ENCODE measurements at regions of chr18 and their contacts with region 1.

Region 1: GRCh38 chr18:24426398-24427294 is at the start of gene IMPACT:
- DNase-seq: peak; percentile 88 to 93
- ATAC-seq: peak; percentile 96
- H3K4me3 ChIP-seq: peak within 1 kb of the TSS; percentile 37 to 84
- H3K27ac ChIP-seq: peak within 1 kb of the TSS in 1 of 2 donors; percentile 69
- H3K4me1 ChIP-seq: no peaks in the 10 kb centered on the region
- H3K27me3 ChIP-seq: no peaks in the 10 kb centered on the region
- total RNA-seq, gene IMPACT: 20.7 to 28.2 TPM

Region 2: DNA sequence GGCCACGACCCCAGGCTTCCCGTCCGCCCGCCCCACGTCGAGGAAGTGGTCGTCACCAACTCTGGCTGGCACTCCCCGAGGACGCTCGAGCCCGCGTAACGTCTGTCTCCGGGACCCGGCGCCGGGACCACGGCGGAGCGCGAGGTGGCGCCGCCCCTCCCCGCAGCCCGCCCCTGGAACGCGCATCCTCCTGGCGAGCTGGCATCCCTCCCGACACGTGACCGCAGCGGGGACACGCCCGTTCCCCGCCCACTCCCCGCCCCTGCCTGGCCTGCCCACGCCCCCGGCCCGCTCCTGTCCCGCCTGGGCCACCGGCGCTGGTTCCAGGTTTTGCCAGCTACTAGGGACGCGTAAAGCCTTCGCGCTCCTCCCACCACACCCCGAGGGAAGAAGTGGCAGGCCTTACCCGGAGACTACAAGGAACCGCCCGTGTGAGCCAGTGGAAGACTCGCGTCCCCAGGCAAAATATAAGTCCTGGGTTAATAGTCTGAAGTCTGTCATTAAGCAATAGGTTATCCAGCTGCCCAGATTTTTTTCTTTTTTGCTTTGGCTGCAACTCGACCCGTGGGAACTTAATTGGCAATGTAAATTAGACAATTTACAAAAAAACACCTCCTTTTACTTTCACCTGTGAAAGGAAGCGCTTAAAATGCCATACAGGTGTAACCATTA is 28.8 kb before region 1 on chr18 and contains the start of gene OSBPL1A:
- intact Hi-C with region 1: loop called in 1 of 2 experiments (anchors 2 kb)
- DNase-seq: peak; percentile 97 to 98
- ATAC-seq: peak; percentile 99
- H3K4me3 ChIP-seq: peak within 1 kb of the TSS; percentile 14 to 82
- H3K27ac ChIP-seq: peak within 1 kb of the TSS in 1 of 2 donors; percentile 41
- H3K4me1 ChIP-seq: no peaks in the 10 kb centered on the region
- H3K27me3 ChIP-seq: no peaks in the 10 kb centered on the region
- total RNA-seq, gene OSBPL1A: 43.2 to 47.4 TPM

Region 3: DNA sequence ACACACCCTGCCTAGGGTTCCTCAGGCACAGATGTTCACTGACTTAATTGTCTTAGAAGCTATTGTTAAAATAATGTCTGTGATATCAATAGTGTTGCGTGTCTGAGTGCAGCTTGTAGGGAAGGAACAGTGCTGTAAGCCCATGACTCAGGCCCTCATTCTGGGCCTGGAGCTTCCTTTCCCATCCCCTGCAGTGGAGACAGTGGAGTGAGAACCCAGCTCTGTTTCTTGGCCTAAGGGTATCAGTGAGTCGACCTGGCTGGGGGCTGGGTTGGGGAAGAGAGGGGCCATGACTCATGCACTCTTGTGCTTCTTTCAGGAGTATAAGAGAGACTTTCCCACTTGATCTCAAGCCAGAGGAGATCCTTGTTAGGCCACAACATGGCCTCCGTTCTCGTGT is 140.6 kb after region 1 on chr18:
- intact Hi-C with region 1: no loop called
- DNase-seq: no peak
- ATAC-seq: no peak
- H3K4me3 ChIP-seq: no peak overlapping the region
- H3K27ac ChIP-seq: no peak overlapping the region
- H3K4me1 ChIP-seq: no peaks in the 10 kb centered on the region
- H3K27me3 ChIP-seq: no peaks in the 10 kb centered on the region

Measured in aorta (tissue), 5 donors.